OCI-LY7 (cell line): ENCODE measurements at regions of chr5 and their contacts with region 1.

Region 1: GRCh38 chr5:132963175-132964104 is at the start of gene AFF4:
- DNase-seq: peak; percentile 95
- H3K4me3 ChIP-seq: peak within 1 kb of the TSS; percentile 80
- H3K27ac ChIP-seq: peak within 1 kb of the TSS; percentile 68
- H3K4me1 ChIP-seq: peaks cover 21% of the 10 kb centered on the region
- CTCF ChIP-seq: no peak
- total RNA-seq, gene AFF4: 19.6 and 21.6 TPM in 2 replicates

Region 2: GRCh38 chr5:132866342-132867045 is 96.9 kb before region 1 on chr5 and contains the starts of genes GDF9 and UQCRQ:
- CTCF ChIA-PET with region 1: no interaction called
- POLR2A ChIA-PET with region 1: no interaction called
- intact Hi-C with region 1: loop called (anchors 2 kb)
- DNase-seq: peak; percentile 100
- H3K4me3 ChIP-seq: peak within 1 kb of the TSS; percentile 94
- H3K27ac ChIP-seq: peak within 1 kb of the TSS; percentile 32
- H3K4me1 ChIP-seq: peaks cover 17% of the 10 kb centered on the region
- CTCF ChIP-seq: peak; percentile 33; the same call in 1 of the 2 replicates
- total RNA-seq, gene GDF9: 0.44 and 0.66 TPM in 2 replicates
- total RNA-seq, gene UQCRQ: 140 and 158 TPM in 2 replicates

Region 3: GRCh38 chr5:132905867-132906295 is 57.6 kb before region 1 on chr5:
- CTCF ChIA-PET with region 1: no interaction called
- POLR2A ChIA-PET with region 1: no interaction called
- intact Hi-C with region 1: no loop called
- DNase-seq: peak; percentile 15
- H3K4me3 ChIP-seq: no peak overlapping the region
- H3K27ac ChIP-seq: no peak overlapping the region
- H3K4me1 ChIP-seq: peaks cover 31% of the 10 kb centered on the region
- CTCF ChIP-seq: peak; percentile 31; the same call in 1 of the 2 replicates

Region 4: DNA sequence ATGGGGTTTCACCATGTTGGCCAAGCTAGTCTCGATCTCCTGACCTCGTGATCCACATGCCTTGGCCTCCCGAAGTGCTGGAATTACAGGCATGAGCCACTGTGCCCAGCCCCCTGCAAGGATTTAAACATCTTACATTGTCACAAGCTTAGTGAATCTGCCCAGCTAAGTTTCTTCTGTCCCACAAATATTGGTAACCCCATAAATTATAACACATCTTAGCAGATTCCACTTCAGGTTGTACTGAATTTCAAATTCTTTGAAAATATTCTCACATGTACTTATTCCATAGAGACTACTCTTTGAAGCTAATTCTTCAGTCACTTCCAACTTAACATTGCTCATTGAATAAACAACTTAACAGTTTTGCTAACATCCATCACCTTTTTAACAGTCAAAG is 13.4 kb after region 1 on chr5:
- CTCF ChIA-PET with region 1: no interaction called
- POLR2A ChIA-PET with region 1: interaction called, 14 read pairs
- intact Hi-C with region 1: no loop called
- DNase-seq: no peak
- H3K4me3 ChIP-seq: no peak overlapping the region
- H3K27ac ChIP-seq: no peak overlapping the region
- H3K4me1 ChIP-seq: no peaks in the 10 kb centered on the region
- CTCF ChIP-seq: no peak

Region 5: DNA sequence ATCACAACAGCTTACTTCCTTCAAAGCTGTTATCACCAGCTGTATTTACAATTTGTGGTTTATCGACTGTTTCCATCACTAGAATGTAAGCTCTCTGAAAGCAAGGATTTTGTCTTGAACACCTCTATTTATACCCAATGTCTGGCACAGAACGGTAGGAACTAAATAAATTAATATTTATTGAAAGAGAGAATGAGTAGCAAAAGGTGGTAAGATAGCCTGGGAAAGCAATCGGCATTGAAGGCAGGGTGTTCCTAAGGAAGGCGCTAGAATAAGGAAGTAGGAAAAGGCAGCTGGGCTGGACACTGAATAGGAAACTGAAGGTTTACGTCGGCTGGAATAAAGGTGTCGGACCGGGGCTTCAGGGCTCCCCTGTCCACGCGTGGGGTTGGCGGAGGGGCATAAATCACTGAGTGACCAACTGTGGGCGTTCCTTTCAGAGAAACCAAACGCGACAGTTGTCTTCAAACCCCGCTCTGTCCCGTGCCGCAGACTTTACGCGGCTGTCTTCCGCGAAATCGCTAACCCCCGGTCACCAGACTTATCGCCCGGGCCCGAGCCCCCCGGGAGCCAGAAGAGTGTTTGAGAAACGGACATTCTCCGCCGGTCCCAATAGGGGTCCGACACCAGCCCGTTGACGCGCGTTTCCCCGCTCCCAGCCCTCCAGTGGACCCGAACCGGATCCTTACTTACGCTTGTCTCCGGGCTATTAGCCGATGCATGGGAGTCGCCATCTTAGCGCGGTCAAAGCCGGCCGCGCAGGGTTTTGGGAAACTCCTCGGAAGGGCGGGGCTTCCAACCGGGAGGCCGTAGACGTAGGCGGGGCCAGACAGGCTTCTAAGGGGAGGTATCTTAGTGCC is 62.6 kb after region 1 on chr5 and contains the start of gene ZCCHC10:
- CTCF ChIA-PET with region 1: no interaction called
- POLR2A ChIA-PET with region 1: interaction called, 9 read pairs
- intact Hi-C with region 1: loop called (anchors 1 kb)
- DNase-seq: peak; percentile 96
- H3K4me3 ChIP-seq: peak within 1 kb of the TSS; percentile 79
- H3K27ac ChIP-seq: peak within 1 kb of the TSS; percentile 69
- H3K4me1 ChIP-seq: peaks cover 36% of the 10 kb centered on the region
- CTCF ChIP-seq: no peak
- total RNA-seq, gene ZCCHC10: 26.9 and 27.2 TPM in 2 replicates

Region 6: GRCh38 chr5:133051580-133052332 is 88.3 kb after region 1 on chr5 and contains the start of gene HSPA4:
- CTCF ChIA-PET with region 1: no interaction called
- POLR2A ChIA-PET with region 1: interaction called, 4 read pairs
- intact Hi-C with region 1: loop called (anchors 2 kb)
- DNase-seq: peak; percentile 100
- H3K4me3 ChIP-seq: peak within 1 kb of the TSS; percentile 99
- H3K27ac ChIP-seq: peak within 1 kb of the TSS; percentile 97
- H3K4me1 ChIP-seq: peaks cover 38% of the 10 kb centered on the region
- CTCF ChIP-seq: no peak
- total RNA-seq, gene HSPA4: 65.4 and 86.6 TPM in 2 replicates